ENCODE measurements at regions of chr11 and their contacts with region 1.

Region 1: GRCh38 chr11:102109896-102110760 is at the start of gene YAP1:
- DNase-seq: peak; percentile 87 to 95
- H3K4me3 ChIP-seq: peak within 1 kb of the TSS; percentile 86 to 97
- H3K27ac ChIP-seq: peak within 1 kb of the TSS; percentile 95 to 100
- H3K4me1 ChIP-seq: peaks cover 0 to 38% (median 16%) of the 10 kb centered on the region in 4 donors
- H3K27me3 ChIP-seq: no peaks in the 10 kb centered on the region
- CTCF ChIP-seq: no peak

Region 2: DNA sequence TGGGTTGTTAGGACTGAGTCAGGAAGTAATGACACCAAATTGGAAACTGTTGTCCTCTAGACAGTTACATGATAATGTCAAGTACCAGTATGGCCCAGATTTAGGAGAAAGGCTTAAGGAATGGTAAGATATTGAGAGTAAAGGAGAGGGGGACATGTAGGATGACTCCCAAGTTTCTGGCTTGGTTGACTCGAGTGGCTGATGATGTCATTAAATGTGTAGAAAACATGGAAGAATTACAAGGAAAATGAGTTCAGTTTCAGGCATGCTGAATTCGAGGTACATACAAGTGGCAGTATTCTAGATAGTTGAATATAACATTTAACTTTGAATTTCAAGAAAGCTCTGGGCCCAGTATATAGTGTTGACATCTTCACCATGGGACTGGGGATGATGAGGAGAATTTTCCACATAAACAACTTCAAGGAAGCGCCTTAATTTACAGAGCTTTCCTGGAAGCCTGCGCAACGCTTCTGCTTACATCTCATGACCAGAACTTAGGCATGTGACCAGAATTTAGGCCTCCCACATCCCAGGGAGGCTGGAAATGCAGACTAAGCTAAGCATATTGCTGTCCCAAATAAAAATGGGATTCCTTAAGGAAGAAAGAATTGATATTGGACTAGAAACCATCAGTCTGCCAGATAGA is 59.1 kb before region 1 on chr11:
- intact Hi-C with region 1: loop called (anchors 10 kb)
- DNase-seq: no peak
- H3K4me3 ChIP-seq: no peak overlapping the region
- H3K27ac ChIP-seq: no peak overlapping the region
- H3K4me1 ChIP-seq: peaks cover 0 to 7% (median 6%) of the 10 kb centered on the region in 4 donors
- H3K27me3 ChIP-seq: no peaks in the 10 kb centered on the region
- CTCF ChIP-seq: no peak

Region 3: GRCh38 chr11:102177974-102178631 is 68.0 kb after region 1 on chr11:
- intact Hi-C with region 1: loop called (anchors 10 kb)
- DNase-seq: no peak
- H3K4me3 ChIP-seq: no peak overlapping the region
- H3K27ac ChIP-seq: peak overlapping the region; percentile 81 to 87
- H3K4me1 ChIP-seq: peaks cover 0 to 52% (median 14%) of the 10 kb centered on the region in 4 donors
- H3K27me3 ChIP-seq: no peaks in the 10 kb centered on the region
- CTCF ChIP-seq: no peak

Region 4: DNA sequence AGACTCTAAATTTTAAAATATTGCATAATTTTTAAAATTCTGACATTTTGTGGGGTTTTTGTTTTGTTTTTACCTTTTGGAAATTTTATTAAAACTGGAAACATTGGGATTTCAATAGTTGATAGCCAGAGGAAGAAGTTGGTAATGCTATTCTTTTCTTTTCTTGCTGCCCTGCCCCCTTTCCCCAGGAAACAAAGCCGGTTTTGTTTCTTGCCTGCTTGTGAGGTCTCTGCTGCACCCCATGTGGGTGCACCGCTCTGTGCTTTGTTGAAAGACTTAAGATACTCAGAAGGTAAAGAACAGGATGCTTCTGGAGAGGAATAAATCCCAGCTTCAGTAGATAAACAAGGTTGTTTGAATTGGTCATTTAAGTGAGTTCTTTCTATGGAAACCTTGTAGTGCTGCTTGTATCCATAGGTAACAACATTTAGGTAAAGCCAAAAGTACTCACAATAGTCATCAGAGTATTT is 87.6 kb after region 1 on chr11:
- intact Hi-C with region 1: no loop called
- DNase-seq: no peak
- H3K4me3 ChIP-seq: no peak overlapping the region
- H3K27ac ChIP-seq: peak overlapping the region in 1 of 2 donors; percentile 1
- H3K4me1 ChIP-seq: peaks cover 0 to 76% (median 9%) of the 10 kb centered on the region in 4 donors
- H3K27me3 ChIP-seq: no peaks in the 10 kb centered on the region
- CTCF ChIP-seq: no peak

Region 5: DNA sequence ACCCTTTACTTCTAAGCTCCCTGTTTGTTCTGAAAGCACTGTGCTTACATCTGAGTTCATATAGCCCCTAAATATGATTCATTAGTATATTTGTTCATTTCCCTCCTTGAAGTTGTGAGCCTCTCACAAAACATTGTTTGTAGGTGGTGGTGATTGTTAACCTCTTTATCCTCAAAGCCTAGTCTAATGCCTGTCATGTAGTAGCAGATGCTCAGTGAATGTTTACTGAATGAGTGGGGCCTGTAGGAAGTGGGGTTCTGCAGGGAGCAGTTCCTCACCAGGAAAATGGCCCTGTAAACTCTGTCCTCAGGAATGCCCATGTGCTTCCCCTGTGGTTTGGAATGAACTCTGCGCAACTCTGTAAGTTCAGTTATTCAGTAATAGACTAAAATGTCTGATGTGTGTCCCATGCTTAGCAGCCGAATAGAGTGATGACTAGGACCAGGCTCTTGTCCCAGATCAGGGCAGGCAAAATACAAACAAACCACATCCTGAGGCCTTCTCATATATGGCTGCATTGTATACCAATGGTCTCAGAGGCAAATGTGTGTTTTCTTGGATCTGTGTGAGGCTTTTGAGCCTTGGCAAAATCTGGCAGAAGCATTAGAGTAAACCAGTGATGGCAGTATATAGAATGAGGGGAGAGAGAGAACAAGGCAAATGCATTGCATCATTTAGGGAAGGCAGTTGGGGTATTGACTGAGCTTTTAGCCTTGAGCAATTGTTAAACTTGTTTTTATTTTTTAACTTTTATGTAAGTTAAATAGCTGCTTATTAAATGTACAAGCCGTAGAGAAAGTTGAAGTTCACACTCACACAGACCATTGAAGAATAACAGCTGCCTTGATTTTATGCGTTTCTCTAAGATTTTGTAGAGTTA is 115.8 kb after region 1 on chr11:
- intact Hi-C with region 1: loop called (anchors 10 kb)
- DNase-seq: no peak
- H3K4me3 ChIP-seq: no peak overlapping the region
- H3K27ac ChIP-seq: peak overlapping the region in 1 of 2 donors; percentile 14
- H3K4me1 ChIP-seq: peaks cover 0 to 57% (median 21%) of the 10 kb centered on the region in 4 donors
- H3K27me3 ChIP-seq: no peaks in the 10 kb centered on the region
- CTCF ChIP-seq: no peak

Region 6: DNA sequence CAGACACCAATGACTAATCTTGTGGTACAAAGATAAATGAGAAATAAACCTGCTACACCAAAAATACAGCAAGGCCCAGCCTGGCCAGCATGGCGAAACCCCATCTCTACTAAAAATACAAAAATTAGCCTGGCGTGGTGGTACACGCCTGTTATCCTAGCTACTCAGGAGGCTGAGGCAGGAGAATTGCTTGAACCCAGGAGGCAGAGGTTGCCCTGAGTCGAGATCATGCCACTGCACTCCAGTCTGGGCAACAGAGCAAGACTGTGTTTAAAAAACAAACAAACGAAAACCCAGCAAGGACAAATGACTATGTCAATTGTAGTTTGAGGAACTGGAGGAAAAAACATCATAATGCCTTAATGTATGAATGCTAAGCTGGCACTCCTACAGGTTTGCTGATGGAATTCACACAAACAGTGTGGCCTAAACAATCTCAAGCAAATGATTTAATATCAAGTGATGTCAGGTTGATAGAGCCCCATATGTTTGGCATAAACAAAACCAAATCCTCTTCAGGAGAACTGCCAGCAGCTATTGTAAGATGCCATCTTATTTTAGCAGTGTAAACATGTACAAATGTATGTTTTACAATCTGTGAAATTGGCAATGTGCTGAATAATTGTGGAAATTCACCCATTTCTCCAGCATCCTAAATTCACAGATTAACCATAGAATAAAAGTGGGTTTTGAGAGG is 400.5 kb after region 1 on chr11:
- intact Hi-C with region 1: no loop called
- DNase-seq: no peak
- H3K4me3 ChIP-seq: no peak overlapping the region
- H3K27ac ChIP-seq: no peak overlapping the region
- H3K4me1 ChIP-seq: peaks cover 0 to 10% (median 0%) of the 10 kb centered on the region in 4 donors
- H3K27me3 ChIP-seq: peaks cover 0 to 2% of the 10 kb centered on the region in 2 donors
- CTCF ChIP-seq: no peak